ENCODE measurements at regions of chr17 and their contacts with region 1.

Region 1: GRCh38 chr17:58517734-58518609 is 3.5 kb upstream of the MTMR4 start:
- DNase-seq: peak; percentile 99
- H3K4me3 ChIP-seq: peak overlapping the region; percentile 83
- H3K27ac ChIP-seq: peak overlapping the region; percentile 91
- H3K27me3 ChIP-seq: no peaks in the 10 kb centered on the region
- CTCF ChIP-seq: no peak

Region 2: DNA sequence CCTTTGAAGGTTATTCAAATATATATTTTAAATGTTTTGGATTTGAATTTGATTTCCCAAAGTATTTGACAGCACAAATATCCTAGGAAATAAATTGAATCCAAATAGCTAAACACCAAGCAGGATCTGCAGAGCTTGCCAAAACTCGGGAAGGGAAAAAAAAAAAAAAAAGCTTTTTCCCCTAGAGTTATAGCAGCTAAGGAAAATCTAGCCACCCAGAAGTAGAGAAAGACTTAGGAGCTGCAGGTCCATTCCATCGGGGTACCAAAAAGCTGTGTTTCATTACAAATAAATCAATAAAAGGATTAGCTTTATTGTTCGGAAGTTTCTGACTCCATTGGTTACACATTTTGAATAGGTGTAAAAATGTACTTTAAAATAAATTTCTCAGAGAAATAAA is 49.0 kb before region 1 on chr17:
- CTCF ChIA-PET with region 1: no interaction called
- POLR2A ChIA-PET with region 1: no interaction called
- DNase-seq: no peak
- H3K4me3 ChIP-seq: no peak overlapping the region
- H3K27ac ChIP-seq: no peak overlapping the region
- H3K27me3 ChIP-seq: no peaks in the 10 kb centered on the region
- CTCF ChIP-seq: no peak

Region 3: GRCh38 chr17:58534901-58535421 is 17.0 kb after region 1 on chr17:
- CTCF ChIA-PET with region 1: interaction called, 14 read pairs
- POLR2A ChIA-PET with region 1: no interaction called
- DNase-seq: no peak
- H3K4me3 ChIP-seq: no peak overlapping the region
- H3K27ac ChIP-seq: no peak overlapping the region
- H3K27me3 ChIP-seq: peaks cover 29% of the 10 kb centered on the region
- CTCF ChIP-seq: no peak